ENCODE measurements at regions of chr4 and their contacts with region 1.

Region 1: DNA sequence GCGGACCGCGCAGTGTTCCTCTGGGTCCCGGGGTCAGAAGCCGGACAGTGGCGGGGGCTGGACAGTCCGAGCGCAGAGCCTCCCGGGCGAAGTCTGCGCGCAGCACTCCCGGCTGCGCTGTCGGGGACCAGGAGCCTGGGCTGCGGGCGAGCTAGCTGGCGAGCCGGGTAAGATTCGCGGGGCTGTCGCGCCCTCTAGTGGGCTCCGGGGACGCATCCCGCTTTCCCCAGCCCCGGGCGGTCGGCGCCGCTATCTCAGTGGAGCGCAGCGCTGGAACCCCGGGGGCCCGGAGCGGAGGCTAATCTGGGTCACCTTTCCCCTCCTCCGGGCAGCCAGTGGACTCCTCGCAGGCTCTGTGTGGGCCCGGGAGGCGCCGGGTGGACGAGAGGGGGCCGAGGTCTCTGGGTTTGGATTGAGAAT is 4.2 kb downstream of the PDGFRA start:
- DNase-seq: peak; percentile 84
- H3K4me3 Mint-ChIP-seq: peak overlapping the region; percentile 70
- H3K27ac Mint-ChIP-seq: no peak overlapping the region
- H3K4me1 Mint-ChIP-seq: peaks cover 29% of the 10 kb centered on the region
- H3K27me3 Mint-ChIP-seq: peaks cover 57% of the 10 kb centered on the region

Region 2: DNA sequence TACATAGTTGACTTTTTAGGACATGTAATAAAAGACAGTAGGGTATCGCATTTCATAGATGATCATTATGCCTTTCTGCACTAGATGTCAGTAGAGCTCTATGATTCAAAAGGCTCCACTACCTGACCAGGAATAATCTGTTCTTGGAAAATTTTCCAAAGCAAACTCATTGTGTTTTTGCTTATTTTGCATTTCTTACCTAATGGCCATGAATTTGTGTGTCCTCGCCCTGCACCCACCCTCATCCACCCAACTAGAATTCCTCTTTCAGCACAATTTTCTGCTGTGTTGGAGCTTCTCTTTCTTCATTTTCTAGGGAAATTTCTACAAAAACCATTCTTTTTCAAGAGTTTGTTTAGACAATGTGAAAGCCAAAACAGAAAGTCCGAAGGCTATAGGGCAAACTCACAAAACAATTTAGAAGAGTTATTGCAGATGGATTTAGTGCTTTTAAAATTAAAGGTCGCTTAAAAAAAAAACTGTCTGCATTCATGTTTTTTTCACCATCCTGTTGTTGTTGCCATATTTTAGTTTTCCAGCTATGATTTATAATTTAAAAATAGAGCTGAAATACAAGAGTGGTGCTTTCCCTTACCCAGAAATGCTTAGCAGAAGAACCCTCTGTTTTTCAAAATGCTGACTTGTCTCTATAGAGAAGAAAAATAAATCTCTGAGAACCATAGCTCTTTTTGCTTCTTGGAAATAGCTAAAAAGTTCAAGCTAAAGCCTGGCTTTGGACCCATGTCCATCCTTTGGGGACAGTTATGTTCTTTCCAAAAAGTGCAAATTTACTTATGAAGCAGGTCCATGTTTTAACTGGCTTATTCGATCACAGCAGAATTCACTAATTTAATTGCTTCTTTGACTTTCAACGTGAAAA is 1998.5 kb before region 1 on chr4:
- CTCF ChIA-PET with region 1: no interaction called
- intact Hi-C with region 1: loop called (anchors 10 kb)
- DNase-seq: no peak
- H3K4me3 Mint-ChIP-seq: no peak overlapping the region
- H3K27ac Mint-ChIP-seq: no peak overlapping the region
- H3K4me1 Mint-ChIP-seq: no peaks in the 10 kb centered on the region
- H3K27me3 Mint-ChIP-seq: peaks cover 7% of the 10 kb centered on the region

Region 3: DNA sequence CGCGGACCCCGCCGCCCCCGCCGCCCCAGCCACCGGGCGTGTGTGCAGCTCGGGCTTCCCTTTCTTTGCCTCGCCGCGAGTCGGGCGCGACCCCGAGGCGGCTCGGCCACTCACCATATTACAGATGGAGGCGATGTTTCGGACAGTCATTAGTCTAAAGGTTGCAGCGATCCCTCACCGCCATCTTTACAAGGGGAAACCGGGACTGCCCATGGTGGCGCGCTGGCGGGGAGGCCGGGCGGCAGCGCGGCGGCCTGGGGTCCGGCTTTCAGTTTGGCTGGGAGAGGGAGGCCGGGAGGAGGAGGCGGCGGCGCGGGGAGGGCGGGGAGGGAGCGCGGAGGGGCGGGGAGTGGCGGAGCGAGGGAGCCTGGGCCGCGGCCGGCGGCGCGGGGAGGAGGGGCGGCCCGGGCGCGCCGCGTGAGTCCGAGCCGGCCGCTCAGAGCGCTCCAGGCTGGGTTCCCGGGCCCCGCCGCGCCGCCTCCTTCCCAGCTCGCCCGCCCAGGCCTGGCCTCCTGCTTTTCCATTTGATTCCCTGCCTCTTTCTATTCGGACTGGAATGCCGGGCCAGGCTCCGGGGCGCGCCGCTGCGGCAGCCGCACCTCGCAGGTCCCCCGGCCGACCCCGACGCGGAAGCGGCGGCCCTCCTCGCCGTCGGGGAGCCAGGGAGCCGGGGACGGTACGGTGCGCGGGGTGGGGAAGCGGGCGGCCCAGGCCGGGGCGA is 1574.1 kb before region 1 on chr4 and contains the start of gene USP46:
- CTCF ChIA-PET with region 1: no interaction called
- intact Hi-C with region 1: loop called (anchors 10 kb)
- DNase-seq: peak; percentile 38
- H3K4me3 Mint-ChIP-seq: peak within 1 kb of the TSS; percentile 76
- H3K27ac Mint-ChIP-seq: no peak within 1 kb of the TSS
- H3K4me1 Mint-ChIP-seq: peaks cover 10% of the 10 kb centered on the region
- H3K27me3 Mint-ChIP-seq: peaks cover 29% of the 10 kb centered on the region
- total RNA-seq, gene USP46: 1.7 to 1.9 TPM

Region 4: GRCh38 chr4:53196882-53197771 is 1036.2 kb before region 1 on chr4:
- CTCF ChIA-PET with region 1: interaction called, 3 read pairs
- intact Hi-C with region 1: loop called (anchors 1 kb)
- DNase-seq: no peak
- H3K4me3 Mint-ChIP-seq: no peak overlapping the region
- H3K27ac Mint-ChIP-seq: no peak overlapping the region
- H3K4me1 Mint-ChIP-seq: no peaks in the 10 kb centered on the region
- H3K27me3 Mint-ChIP-seq: no peaks in the 10 kb centered on the region

Region 5: DNA sequence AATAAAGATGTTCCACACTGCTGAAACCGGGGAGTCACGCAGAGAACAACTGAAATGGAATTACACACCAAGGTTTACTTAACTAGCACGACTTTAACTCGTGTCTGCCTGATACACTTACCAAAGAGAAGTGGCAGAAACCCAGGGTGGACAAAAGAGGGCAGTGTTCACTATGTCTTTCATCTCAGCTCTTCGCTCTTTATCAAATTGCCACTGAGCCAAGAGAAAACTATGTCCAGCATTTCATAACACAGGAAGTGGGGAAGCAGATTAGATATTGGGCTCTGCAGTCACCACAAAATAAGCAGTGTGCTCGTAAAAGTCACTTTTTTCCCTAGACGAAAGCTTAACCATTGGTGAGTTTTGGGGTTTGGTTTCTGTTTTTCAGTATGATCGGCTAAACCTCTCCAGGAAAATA is 324.6 kb before region 1 on chr4:
- CTCF ChIA-PET with region 1: interaction called, 30 read pairs
- intact Hi-C with region 1: loop called (anchors 1 kb)
- DNase-seq: peak; percentile 23
- H3K4me3 Mint-ChIP-seq: no peak overlapping the region
- H3K27ac Mint-ChIP-seq: no peak overlapping the region
- H3K4me1 Mint-ChIP-seq: peaks cover 12% of the 10 kb centered on the region
- H3K27me3 Mint-ChIP-seq: peaks cover 46% of the 10 kb centered on the region

Region 6: DNA sequence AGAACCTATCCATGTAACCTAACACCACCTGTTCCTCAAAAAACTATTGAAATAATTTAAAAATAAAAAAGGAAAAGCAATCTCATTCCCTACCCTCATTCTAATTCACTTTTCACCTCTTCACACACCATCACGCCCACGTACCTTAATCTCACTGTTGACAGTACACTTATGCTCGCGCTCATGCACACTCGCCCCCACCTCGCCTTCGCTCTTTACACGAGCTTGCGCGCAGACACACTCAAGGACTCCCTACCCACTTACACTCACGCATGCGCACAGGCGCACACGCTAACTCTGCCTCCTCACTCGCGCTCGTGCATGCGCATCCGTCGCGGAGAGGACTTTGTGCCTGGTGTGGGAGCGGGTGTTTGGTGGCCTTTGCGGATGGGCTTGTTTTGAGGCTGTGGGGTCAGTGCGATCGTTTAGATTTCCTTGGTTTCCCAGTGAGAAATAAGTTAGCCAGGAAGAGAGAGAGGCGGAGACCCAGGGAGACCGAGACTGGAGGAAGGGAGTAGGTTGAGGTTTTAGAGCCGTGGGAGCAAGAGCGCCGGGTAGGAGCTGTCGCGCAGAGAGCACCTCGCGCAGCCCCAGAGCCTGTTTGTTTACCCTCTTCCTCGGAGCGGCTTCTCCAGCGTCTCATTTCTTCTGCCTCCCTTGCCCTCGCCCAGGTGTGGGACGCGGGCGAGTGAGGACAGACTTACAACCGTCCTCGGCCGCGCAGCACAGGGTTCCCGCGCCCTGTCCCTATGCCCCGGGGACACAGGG is 141.5 kb before region 1 on chr4:
- CTCF ChIA-PET with region 1: interaction called, 3 read pairs
- intact Hi-C with region 1: loop called (anchors 2 kb)
- DNase-seq: peak; percentile 74
- H3K4me3 Mint-ChIP-seq: peak overlapping the region; percentile 88
- H3K27ac Mint-ChIP-seq: no peak overlapping the region
- H3K4me1 Mint-ChIP-seq: peaks cover 31% of the 10 kb centered on the region
- H3K27me3 Mint-ChIP-seq: peaks cover 44% of the 10 kb centered on the region